ENCODE measurements at regions of chr2 and their contacts with region 1.

Region 1: DNA sequence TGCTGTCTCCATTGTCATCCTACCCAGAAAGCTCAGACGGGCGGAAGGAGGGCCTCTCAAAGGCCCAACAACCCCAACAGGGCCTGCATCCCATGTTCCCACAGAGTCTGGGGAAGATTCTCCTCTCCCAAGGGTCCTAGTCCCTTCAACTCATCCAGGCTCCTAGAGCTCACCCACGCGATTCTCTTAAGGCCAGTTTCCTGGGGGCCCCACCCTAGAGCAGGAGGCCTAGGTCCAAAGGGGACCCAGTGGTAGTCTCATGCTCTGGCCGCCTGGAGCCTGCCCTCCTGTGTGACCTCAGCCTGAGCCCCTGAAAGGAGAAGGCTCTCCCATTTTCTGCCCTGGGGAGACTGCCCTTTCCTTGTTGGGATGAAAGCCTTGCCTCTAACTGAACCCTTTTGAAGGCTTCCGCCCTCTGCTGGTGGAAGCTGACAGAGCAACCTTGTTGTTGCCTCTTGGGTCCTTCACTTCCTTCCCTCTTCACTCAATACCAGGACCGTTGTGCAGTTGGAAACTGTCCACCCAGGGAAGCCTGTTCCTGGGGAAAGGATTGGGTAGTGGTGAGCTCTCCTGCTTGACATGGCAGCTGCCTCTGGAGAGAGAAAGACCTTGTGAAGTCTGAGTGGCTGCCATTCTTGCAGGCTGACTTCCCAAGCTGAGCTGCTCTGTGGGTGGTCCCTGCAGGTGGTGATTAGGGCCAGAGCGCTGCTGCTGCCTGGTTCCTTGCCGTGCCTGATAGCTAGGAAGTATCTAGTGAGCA is 86.0 kb upstream of the ALPP start:
- DNase-seq: no peak
- ATAC-seq: peak; percentile 98
- H3K4me3 ChIP-seq: no peak overlapping the region
- H3K27ac ChIP-seq: no peak overlapping the region
- H3K4me1 ChIP-seq: no peaks in the 10 kb centered on the region
- H3K27me3 ChIP-seq: no peaks in the 10 kb centered on the region
- CTCF ChIP-seq: peak; percentile 77 to 94 (median 87)
- EP300 ChIP-seq: no peak
- POLR2A ChIP-seq: no peak
- RAD21 ChIP-seq: peak; percentile 67

Region 2: GRCh38 chr2:231925303-231926179 is 367.0 kb before region 1 on chr2:
- CTCF ChIA-PET with region 1: interaction called, 5 read pairs
- POLR2A ChIA-PET with region 1: no interaction called
- RAD21 ChIA-PET with region 1: interaction called, 3 read pairs
- SMC1A ChIA-PET with region 1: interaction called, 4 read pairs
- in situ Hi-C with region 1: no loop called
- intact Hi-C with region 1: loop called (anchors 10 kb)
- DNase-seq: no peak
- ATAC-seq: peak; percentile 92
- H3K4me3 ChIP-seq: peak overlapping the region; percentile 74; the same call in 1 of the 2 replicates
- H3K27ac ChIP-seq: no peak overlapping the region
- H3K4me1 ChIP-seq: peaks cover 13% of the 10 kb centered on the region
- H3K27me3 ChIP-seq: peaks cover 6 to 11% of the 10 kb centered on the region in 2 experiments; a peak in 3 of 4 replicates
- CTCF ChIP-seq: peak; percentile 70 to 75 (median 70)
- EP300 ChIP-seq: no peak
- POLR2A ChIP-seq: no peak
- RAD21 ChIP-seq: peak; percentile 64

Region 3: DNA sequence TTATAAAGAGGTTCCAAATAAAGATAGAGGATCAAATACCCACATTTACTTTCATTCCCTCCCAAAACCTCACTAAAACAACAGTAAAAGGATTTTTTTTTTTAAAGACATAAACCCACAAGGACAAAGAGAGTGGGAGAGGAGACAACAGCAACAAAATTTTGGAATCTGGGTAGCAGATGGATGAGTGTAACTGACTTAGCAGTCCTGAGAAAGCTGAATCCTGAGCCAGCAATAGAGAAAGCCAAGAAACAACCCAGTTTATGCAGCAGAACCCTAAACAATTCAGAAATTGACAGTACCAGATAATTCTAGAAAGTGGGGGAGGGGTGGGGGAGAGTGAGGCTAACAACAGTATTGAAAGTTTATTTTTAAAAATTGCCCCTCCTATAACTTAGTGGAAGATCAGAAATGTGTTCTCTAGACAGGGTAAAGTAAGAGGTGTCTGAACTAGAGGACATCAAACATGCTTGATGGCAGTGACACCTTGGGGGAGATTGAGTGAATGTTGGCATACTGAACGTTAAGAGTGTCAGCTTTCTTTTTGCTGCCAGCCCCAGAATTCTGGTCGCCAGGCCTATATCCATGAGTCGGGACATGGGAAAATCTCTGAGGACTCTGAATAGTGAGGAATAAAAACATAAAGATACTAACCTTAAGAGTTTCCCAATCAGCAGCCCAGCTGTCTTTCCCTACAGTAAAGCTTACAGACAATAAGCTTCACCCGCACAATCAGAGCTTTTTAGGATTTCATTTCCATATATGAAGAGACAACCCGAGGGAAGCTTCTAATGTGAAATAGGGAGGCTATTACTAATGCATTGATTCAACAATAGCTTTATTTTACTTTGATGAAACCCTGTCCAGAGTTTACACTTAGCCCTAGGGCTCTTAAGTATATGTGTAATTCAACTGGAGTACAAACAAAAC is 42.1 kb before region 1 on chr2:
- CTCF ChIA-PET with region 1: interaction called, 13 read pairs
- POLR2A ChIA-PET with region 1: no interaction called
- RAD21 ChIA-PET with region 1: interaction called, 3 read pairs
- SMC1A ChIA-PET with region 1: interaction called, 3 read pairs
- in situ Hi-C with region 1: no loop called
- intact Hi-C with region 1: no loop called
- DNase-seq: no peak
- ATAC-seq: no peak
- H3K4me3 ChIP-seq: no peak overlapping the region
- H3K27ac ChIP-seq: no peak overlapping the region
- H3K4me1 ChIP-seq: no peaks in the 10 kb centered on the region
- H3K27me3 ChIP-seq: no peaks in the 10 kb centered on the region
- CTCF ChIP-seq: no peak
- EP300 ChIP-seq: no peak
- POLR2A ChIP-seq: no peak
- RAD21 ChIP-seq: no peak

Region 4: DNA sequence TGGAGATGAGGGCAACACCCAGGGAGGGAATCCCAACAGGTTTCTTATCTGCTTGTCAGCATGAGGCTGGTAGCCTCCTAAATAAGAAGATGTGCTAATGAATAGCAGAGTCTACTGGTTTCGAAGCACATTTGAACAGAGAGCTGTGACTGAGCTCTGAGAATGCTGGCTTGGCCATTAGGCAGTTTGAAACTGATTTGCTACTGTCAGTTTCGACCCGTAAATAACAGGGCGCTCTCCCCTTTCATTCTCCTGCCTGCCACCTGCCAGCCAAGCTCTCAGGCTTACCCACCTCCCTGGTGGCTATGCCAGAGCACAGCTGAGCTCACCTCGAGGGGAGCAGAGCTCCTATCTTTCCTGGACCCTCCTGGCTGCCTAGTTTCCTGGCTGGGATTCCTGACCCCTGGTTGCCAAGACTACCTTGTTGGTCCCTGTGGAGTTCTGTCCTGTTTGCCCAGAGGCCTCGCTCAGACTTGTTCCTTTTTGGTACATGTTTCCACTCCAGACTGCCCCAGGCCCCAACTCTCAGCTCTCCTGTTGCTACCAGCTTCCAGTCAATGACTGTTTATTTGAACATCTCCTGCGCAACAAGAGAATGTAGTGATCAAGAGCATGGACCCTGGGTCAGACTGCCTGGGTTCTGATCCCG is 16.4 kb before region 1 on chr2:
- CTCF ChIA-PET with region 1: interaction called, 17 read pairs
- POLR2A ChIA-PET with region 1: no interaction called
- RAD21 ChIA-PET with region 1: no interaction called
- SMC1A ChIA-PET with region 1: interaction called, 4 read pairs
- in situ Hi-C with region 1: no loop called
- intact Hi-C with region 1: no loop called
- DNase-seq: no peak
- ATAC-seq: peak; percentile 93
- H3K4me3 ChIP-seq: no peak overlapping the region
- H3K27ac ChIP-seq: peak overlapping the region; percentile 9; the same call in 1 of the 2 replicates
- H3K4me1 ChIP-seq: peaks cover 10% of the 10 kb centered on the region
- H3K27me3 ChIP-seq: no peaks in the 10 kb centered on the region
- CTCF ChIP-seq: no peak
- EP300 ChIP-seq: no peak
- POLR2A ChIP-seq: no peak
- RAD21 ChIP-seq: no peak

Region 5: DNA sequence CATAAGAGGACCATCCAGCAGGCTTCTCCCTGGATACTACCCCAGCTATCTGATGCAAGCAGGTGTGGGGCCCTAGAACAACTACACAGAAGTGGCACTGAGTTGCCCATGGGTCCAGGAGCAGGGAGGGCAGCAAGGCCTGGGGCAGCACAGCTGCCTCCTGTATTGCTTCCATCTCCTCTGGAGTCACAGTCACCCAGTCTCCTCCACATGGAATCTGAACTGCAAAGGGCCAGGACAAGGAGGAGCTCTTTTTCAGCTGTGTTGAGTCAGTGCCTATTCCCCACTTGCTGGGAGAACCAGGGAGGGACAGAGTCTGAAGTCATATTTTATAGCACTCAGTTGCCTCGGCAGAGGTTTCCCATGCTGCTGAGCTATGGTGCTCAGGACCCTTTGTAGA is 18.1 kb after region 1 on chr2:
- CTCF ChIA-PET with region 1: interaction called, 18 read pairs
- POLR2A ChIA-PET with region 1: no interaction called
- RAD21 ChIA-PET with region 1: no interaction called
- SMC1A ChIA-PET with region 1: interaction called, 6 read pairs
- in situ Hi-C with region 1: no loop called
- intact Hi-C with region 1: no loop called
- DNase-seq: no peak
- ATAC-seq: no peak
- H3K4me3 ChIP-seq: no peak overlapping the region
- H3K27ac ChIP-seq: no peak overlapping the region
- H3K4me1 ChIP-seq: peaks cover 13% of the 10 kb centered on the region
- H3K27me3 ChIP-seq: no peaks in the 10 kb centered on the region
- CTCF ChIP-seq: no peak
- EP300 ChIP-seq: no peak
- POLR2A ChIP-seq: no peak
- RAD21 ChIP-seq: no peak

Region 6: GRCh38 chr2:232327105-232328041 is 34.8 kb after region 1 on chr2:
- CTCF ChIA-PET with region 1: interaction called, 20 read pairs
- POLR2A ChIA-PET with region 1: no interaction called
- RAD21 ChIA-PET with region 1: interaction called, 3 read pairs
- SMC1A ChIA-PET with region 1: no interaction called
- in situ Hi-C with region 1: no loop called
- intact Hi-C with region 1: no loop called
- DNase-seq: no peak
- ATAC-seq: peak; percentile 90
- H3K4me3 ChIP-seq: no peak overlapping the region
- H3K27ac ChIP-seq: no peak overlapping the region
- H3K4me1 ChIP-seq: peaks cover 10% of the 10 kb centered on the region
- H3K27me3 ChIP-seq: no peaks in the 10 kb centered on the region
- CTCF ChIP-seq: peak; percentile 61 to 84 (median 81)
- EP300 ChIP-seq: no peak
- POLR2A ChIP-seq: no peak
- RAD21 ChIP-seq: peak; percentile 81

Measured in GM12878 (cell line).